AG04449 (cell line): ENCODE measurements at regions of chr6 and their contacts with region 1.

Region 1: DNA sequence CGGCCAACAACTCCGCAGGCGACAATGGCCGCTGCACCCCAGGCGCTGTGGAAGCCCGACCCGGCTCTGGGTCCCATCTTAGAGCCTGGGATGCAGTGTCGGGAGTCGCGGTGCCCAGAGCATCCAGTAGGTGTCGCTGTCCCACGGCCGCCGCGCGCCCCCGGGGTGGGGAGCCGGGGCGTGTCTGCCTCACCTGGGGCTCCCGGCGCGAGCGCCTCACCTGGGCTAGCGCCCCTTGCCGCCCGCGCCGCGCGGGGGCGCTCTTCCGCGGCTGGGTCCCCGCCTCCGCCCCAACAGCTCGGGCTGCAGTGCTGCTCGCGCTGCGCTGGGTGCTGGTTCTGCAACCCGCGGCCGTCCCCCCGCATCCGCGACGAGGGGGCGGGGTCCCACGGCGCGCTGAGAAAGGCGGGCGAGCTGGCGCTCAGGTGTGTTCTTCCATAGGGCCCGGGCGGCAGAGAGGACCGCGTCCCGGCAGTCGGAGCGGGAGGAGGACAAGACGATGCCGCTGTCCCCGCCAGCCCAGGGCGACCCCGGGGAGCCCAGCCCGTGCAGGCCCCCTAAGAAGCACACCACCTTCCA is at the start of gene CRYBG1:
- DNase-seq: no peak
- H3K4me3 ChIP-seq: peak within 1 kb of the TSS; percentile 41
- CTCF ChIP-seq: peak; percentile 83

Region 2: DNA sequence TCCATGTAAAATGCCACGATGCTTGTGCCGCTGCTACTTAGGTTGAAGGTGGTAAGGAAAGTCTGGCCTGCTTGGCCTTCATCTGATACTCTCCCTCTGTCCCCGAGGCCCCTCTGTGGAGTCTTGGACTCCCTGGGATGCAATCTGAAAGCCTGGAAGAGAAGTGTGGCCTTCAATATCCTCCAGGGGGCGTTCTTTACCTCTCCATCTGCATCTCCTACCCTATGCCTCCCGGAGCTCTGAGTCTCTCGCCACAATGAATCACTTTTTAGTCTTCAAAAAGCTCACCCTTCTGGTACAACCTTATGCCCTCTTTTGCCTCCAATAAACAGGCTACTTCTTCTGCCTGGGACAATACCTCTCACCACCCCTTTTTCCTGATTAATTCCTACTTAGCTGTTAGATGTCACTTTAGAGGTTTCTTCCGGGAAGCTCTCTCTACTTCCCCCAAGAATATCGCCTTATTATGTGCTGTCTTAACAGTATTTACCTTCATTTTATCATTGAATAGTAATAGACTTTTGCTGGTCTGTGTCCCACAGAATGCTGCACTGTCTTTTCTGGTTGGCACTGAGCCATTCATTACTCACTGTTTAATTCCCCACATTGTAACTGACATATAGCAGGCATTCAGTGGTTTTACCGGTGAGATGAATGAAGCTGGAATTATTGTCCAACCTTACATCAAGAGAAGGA is 21.0 kb before region 1 on chr6:
- CTCF ChIA-PET with region 1: interaction called, 27 read pairs
- POLR2A ChIA-PET with region 1: no interaction called
- DNase-seq: peak; percentile 24
- H3K4me3 ChIP-seq: no peak overlapping the region
- CTCF ChIP-seq: peak; percentile 81

Region 3: GRCh38 chr6:106347341-106347740 is 13.2 kb before region 1 on chr6:
- CTCF ChIA-PET with region 1: interaction called, 27 read pairs
- POLR2A ChIA-PET with region 1: no interaction called
- DNase-seq: no peak
- H3K4me3 ChIP-seq: no peak overlapping the region
- CTCF ChIP-seq: no peak

Region 4: DNA sequence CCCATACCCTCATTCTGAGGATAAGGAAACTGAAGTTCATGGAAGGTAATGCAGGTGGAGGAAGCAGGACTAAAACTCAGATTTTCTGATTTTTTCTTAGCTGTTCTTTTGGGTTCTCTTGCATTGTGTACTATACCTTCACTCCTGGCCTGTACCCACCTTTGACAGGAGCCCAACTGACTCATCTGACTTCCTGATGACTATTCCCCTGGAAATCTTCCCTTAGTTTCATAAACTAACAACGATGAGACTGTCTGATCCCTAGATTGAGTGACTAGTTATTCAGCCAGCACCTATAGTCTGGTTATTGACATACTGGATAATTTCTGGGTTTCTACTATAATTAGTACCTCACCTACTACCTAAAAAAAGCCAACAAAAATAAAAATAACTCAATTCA is 10.1 kb after region 1 on chr6:
- CTCF ChIA-PET with region 1: interaction called, 35 read pairs
- POLR2A ChIA-PET with region 1: no interaction called
- DNase-seq: no peak
- H3K4me3 ChIP-seq: no peak overlapping the region
- CTCF ChIP-seq: no peak

Region 5: DNA sequence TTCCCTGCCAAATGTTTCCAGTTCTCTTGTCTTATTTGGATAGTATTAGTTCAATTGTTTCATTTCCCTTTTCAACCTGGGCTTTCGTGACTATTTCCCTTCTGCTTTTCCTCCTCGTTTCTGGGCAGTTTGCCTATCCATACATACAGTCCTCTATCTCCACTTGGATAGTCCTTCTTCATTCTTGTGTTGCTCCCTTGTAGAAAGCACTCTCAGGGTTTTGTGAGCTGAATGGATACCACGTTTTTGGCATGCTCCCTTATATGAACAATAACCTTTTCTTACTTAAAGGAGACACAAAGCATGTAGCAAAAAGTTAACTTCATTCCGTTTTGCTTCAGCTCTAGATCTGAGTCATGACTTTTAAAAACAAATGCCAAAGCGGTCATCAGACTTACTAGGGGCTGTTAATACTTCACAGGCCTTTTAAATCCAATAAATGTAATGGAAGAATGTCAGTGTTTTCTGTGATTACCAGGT is 16.6 kb after region 1 on chr6:
- CTCF ChIA-PET with region 1: interaction called, 35 read pairs
- POLR2A ChIA-PET with region 1: no interaction called
- DNase-seq: peak; percentile 10
- H3K4me3 ChIP-seq: no peak overlapping the region
- CTCF ChIP-seq: no peak